ENCODE measurements at regions of chr19 and their contacts with region 1.

Region 1: GRCh38 chr19:53867225-53868090 is at the start of gene MYADM:
- DNase-seq: peak; percentile 100
- H3K4me3 ChIP-seq: peak within 1 kb of the TSS; percentile 79 to 94 (median 92)
- H3K27ac ChIP-seq: peak within 1 kb of the TSS; percentile 94 to 98 (median 96)
- H3K4me1 ChIP-seq: peaks cover 0 to 51% (median 45%) of the 10 kb centered on the region in 4 donors
- H3K27me3 ChIP-seq: no peaks in the 10 kb centered on the region
- CTCF ChIP-seq: no peak
- EP300 ChIP-seq: peak in 2 of 4 donors; percentile 39 to 69
- POLR2A ChIP-seq: peak; percentile 86 to 96
- total RNA-seq, gene MYADM: 65.5 to 189 (median 97.3) TPM

Region 2: DNA sequence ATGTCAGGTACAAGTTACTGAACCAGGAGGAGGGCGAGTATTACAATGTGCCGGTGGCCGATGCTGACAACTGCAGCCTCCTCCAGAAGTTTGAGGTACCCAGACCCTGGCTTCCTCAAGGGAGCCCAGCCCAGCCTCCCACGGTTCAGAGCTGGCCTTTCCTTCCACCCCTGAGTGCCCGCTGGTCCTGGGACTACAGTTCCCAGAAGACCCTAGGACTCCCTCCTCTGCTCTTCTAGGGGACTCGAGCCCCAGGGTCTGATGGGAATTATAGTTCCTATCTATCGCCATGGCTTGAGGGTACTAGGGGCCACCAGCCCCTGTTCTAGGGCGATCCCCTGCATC is 25.5 kb after region 1 on chr19:
- intact Hi-C with region 1: no loop called
- DNase-seq: no peak
- H3K4me3 ChIP-seq: no peak overlapping the region
- H3K27ac ChIP-seq: no peak overlapping the region
- H3K4me1 ChIP-seq: peaks cover 0 to 6% (median 5%) of the 10 kb centered on the region in 4 donors
- H3K27me3 ChIP-seq: peaks cover 10 to 83% (median 51%) of the 10 kb centered on the region in 3 donors
- CTCF ChIP-seq: no peak
- EP300 ChIP-seq: no peak
- POLR2A ChIP-seq: no peak

Region 3: GRCh38 chr19:54448774-54449700 is 581.6 kb after region 1 on chr19 and contains the start of gene LENG8:
- intact Hi-C with region 1: loop called (anchors 5 kb)
- DNase-seq: peak; percentile 99
- H3K4me3 ChIP-seq: peak within 1 kb of the TSS; percentile 52 to 95 (median 85)
- H3K27ac ChIP-seq: peak within 1 kb of the TSS; percentile 91 to 98 (median 95)
- H3K4me1 ChIP-seq: peaks cover 0 to 51% (median 41%) of the 10 kb centered on the region in 4 donors
- H3K27me3 ChIP-seq: no peaks in the 10 kb centered on the region
- CTCF ChIP-seq: no peak
- EP300 ChIP-seq: peak in 2 of 4 donors; percentile 41 to 46
- POLR2A ChIP-seq: peak; percentile 92 to 97
- total RNA-seq, gene LENG8: 59.1 to 286 (median 107) TPM

Region 4: GRCh38 chr19:55407800-55408532 is 1540.5 kb after region 1 on chr19:
- intact Hi-C with region 1: loop called (anchors 5 kb)
- DNase-seq: peak; percentile 100
- H3K4me3 ChIP-seq: peak overlapping the region; percentile 82 to 99 (median 89)
- H3K27ac ChIP-seq: peak overlapping the region; percentile 96 to 100 (median 98)
- H3K4me1 ChIP-seq: peaks cover 0 to 22% (median 20%) of the 10 kb centered on the region in 4 donors
- H3K27me3 ChIP-seq: no peaks in the 10 kb centered on the region
- CTCF ChIP-seq: no peak
- EP300 ChIP-seq: peak in 1 of 4 donors; percentile 36
- POLR2A ChIP-seq: peak; percentile 31 to 59